ENCODE measurements at regions of chr1 and their contacts with region 1.

Region 1: DNA sequence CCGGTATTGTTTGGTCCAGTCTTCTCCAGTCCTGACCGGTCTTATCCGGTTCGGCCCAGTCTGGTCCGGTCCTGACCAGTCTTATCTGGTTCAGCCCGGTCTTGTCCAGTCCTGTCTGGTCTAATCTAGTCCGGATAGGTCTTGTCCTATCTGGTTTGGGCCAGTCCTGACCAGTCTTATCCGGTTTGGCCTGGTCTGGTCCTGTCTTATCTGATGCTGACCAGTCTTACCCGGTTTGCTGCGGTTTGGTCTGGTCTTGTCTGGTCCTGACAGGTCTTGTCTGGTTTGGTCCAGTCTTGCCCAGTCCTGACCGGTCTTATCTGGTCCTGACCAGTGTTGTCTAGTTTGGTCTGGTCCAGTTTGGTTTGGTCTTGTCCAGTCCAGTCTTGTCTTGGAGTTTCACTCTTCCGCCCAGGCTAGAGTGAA is 30.1 kb downstream of the DHX9 start:
- DNase-seq: no peak
- H3K4me3 ChIP-seq: no peak overlapping the region
- H3K27ac ChIP-seq: no peak overlapping the region
- H3K4me1 ChIP-seq: no peaks in the 10 kb centered on the region
- H3K27me3 ChIP-seq: no peaks in the 10 kb centered on the region
- CTCF ChIP-seq: no peak
- POLR2A ChIP-seq: no peak

Region 2: GRCh38 chr1:183124259-183124658 is 255.0 kb after region 1 on chr1:
- intact Hi-C with region 1: loop called in 1 of 2 experiments (anchors 10 kb)
- DNase-seq: peak in 2 of 7 donors; percentile 7 to 56
- H3K4me3 ChIP-seq: no peak overlapping the region
- H3K27ac ChIP-seq: no peak overlapping the region
- H3K4me1 ChIP-seq: no peaks in the 10 kb centered on the region
- H3K27me3 ChIP-seq: no peaks in the 10 kb centered on the region
- CTCF ChIP-seq: no peak
- POLR2A ChIP-seq: no peak

Measured in adrenal gland (tissue), 19 donors.